GM13977 (cell line): ENCODE measurements at regions of chr18 and their contacts with region 1.

Region 1: GRCh38 chr18:5582849-5583681 is 39.3 kb upstream of the EPB41L3 start:
- DNase-seq: no peak
- CTCF ChIP-seq: no peak

Region 2: DNA sequence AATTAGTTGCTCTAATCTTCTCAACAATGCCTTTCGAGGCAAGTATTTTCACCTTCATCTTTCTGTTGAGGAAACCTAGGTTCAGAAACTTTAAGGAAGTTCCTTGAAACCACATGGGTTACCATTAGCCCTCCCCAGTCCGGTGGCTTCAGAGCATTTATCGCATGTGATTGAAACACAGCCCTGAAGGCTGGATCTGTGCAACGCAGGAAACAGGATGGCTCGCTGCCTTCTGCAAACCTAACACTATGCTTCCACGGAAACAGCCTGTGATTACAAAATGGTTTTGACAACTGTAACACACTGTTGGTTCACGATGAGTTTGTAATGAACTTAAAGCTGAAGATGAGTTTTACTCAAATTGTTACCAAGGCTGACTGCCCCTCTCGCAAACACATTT is 107.8 kb before region 1 on chr18:
- in situ Hi-C with region 1: loop called (anchors 25 kb)
- DNase-seq: no peak
- CTCF ChIP-seq: no peak